MCF 10A (cell line): ENCODE measurements at regions of chr17 and their contacts with region 1.

Region 1: DNA sequence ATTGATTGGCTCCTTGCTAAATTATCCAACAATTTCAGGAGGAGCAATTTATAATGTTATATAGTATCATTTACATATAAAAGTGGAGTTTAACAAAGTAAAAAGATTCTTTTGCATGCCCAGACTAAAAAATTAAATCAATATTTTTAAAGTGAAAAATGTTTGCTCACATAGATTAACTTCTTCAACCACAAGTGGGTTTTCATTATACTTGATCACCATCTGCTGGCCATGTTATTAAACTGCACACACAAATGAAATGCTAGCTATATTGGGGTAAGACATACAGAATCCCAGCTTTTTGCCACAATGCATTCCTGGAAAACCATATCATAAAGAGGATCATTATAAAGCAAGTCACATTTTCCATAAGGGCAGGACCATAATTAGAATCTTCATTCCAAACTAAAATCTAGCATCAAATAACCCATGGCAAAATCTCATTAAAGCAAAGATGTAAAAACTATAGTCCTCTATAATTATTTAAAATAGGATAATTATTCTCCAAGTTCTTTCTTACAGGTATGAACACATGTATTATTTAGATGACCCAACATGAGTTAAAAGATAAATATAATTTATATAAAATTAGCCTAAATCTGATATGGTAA is 26.3 kb downstream of the CEP112 start:
- DNase-seq: peak; percentile 61
- H3K4me3 Mint-ChIP-seq: no peak overlapping the region
- H3K27ac Mint-ChIP-seq: no peak overlapping the region
- H3K4me1 Mint-ChIP-seq: no peaks in the 10 kb centered on the region
- H3K27me3 Mint-ChIP-seq: no peaks in the 10 kb centered on the region
- CTCF ChIP-seq: peak; percentile 75

Region 2: GRCh38 chr17:65561394-65562205 is 604.0 kb before region 1 on chr17 and contains the start of gene AXIN2:
- CTCF ChIA-PET with region 1: no interaction called
- POLR2A ChIA-PET with region 1: no interaction called
- intact Hi-C with region 1: loop called (anchors 10 kb)
- DNase-seq: peak; percentile 83
- H3K4me3 Mint-ChIP-seq: peak within 1 kb of the TSS; percentile 80
- H3K27ac Mint-ChIP-seq: peak within 1 kb of the TSS; percentile 25
- H3K4me1 Mint-ChIP-seq: no peaks in the 10 kb centered on the region
- H3K27me3 Mint-ChIP-seq: peaks cover 10% of the 10 kb centered on the region
- CTCF ChIP-seq: no peak
- total RNA-seq, gene AXIN2: 0.16 and 0.52 TPM in 2 replicates

Region 3: DNA sequence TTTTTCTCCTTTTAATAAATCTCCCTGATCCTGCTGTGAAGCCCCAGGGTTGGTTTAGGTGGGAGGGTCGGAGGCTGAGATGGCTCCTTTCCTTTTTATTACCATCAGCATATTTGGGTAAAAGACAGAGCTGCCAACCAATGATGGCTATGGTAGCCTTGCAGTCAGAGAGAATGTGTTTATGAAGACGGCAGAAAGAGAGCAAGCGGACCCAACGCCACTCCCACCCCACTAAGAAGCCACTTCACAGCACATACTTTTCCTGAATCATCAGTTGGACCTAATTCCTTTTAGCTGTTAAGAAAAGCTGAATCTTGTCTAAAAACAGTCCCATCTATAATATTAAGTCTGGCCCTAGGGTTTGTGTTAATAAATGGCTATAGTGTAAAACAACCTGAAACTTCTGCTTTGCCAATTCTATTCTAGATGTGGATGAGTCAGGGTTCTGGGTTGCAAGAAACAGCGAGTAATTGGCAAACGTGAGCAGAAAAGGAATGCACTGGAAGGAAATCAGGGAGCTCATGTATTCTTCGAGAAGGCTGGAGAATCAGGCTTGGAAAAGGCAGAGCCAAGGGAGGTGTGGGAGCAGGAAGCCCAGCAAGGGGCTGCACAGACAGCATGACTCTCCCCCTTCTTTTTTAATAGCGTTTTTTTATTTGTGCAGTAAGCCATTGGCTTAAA is 102.8 kb after region 1 on chr17:
- CTCF ChIA-PET with region 1: no interaction called
- POLR2A ChIA-PET with region 1: no interaction called
- intact Hi-C with region 1: no loop called
- DNase-seq: peak; percentile 69
- H3K4me3 Mint-ChIP-seq: no peak overlapping the region
- H3K27ac Mint-ChIP-seq: no peak overlapping the region
- H3K4me1 Mint-ChIP-seq: peaks cover 20% of the 10 kb centered on the region
- H3K27me3 Mint-ChIP-seq: no peaks in the 10 kb centered on the region
- CTCF ChIP-seq: no peak